CD4-positive, alpha-beta memory T cell (primary cell): ENCODE measurements at regions of chr1 and their contacts with region 1.

Region 1: DNA sequence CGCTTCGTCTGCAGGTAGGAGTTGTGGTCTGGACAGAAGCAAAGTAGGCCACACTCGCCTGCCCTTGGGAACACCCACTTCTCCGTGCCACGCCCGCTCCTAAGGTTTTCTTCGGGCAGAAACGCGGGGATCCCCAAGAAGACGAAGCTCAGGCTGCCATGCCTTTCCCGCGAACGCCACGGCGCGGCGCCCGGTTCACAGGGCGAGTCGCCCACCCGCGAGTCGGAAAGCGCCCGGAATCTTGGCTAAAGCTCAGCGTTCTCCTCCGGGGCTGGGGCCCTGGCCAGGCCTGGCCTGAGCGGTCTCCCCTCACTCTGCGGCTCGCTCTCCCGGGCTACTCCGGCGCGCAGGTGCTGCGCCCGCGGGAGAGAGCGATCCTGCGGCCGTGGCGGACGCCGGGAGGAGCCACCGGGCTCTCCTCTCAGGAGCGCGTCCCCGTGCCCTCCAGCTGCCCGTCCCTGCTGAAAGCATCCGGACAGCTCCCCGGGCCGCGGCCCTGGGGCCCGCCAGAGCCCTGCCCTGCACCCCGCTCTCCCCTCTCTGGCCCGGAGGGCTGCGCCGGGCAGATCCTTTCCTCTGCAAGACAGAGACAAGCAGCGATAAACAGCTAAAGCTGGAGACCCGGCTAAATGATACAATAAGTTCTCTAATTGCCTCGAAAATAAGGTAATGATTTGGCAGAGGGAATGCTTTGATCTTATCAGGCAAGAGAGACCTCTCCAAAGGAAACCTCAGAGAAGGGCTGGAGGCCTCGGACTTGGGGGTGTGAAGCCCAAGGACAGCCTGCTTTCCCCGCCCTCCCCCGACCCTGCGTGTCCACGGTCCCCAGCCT is 6.7 kb upstream of the WNT2B start:
- DNase-seq: peak in 4 of 5 donors; percentile 30 to 51 (median 38)
- H3K4me3 ChIP-seq: peak overlapping the region; percentile 24 to 36
- H3K4me3 Mint-ChIP-seq: peak overlapping the region; percentile 62 to 84 (median 75)
- H3K27ac ChIP-seq: no peak overlapping the region
- H3K27ac Mint-ChIP-seq: no peak overlapping the region
- H3K4me1 ChIP-seq: peaks cover 5% of the 10 kb centered on the region
- H3K4me1 Mint-ChIP-seq: peaks cover 2 to 13% (median 5%) of the 10 kb centered on the region in 4 donors
- H3K27me3 ChIP-seq: peaks cover 39% of the 10 kb centered on the region
- H3K27me3 Mint-ChIP-seq: peaks cover 43 to 51% of the 10 kb centered on the region in 2 donors

Region 2: GRCh38 chr1:112614460-112615065 is 112.5 kb after region 1 on chr1:
- CTCF ChIA-PET with region 1: interaction called, 45 read pairs
- POLR2A ChIA-PET with region 1: interaction called, 4 read pairs
- intact Hi-C with region 1: loop called (anchors 1 kb)
- DNase-seq: peak in 4 of 5 donors; percentile 28 to 48 (median 34)
- H3K4me3 ChIP-seq: no peak overlapping the region
- H3K4me3 Mint-ChIP-seq: peak overlapping the region in 1 of 8 donors; percentile 78
- H3K27ac ChIP-seq: no peak overlapping the region
- H3K27ac Mint-ChIP-seq: peak overlapping the region in 5 of 7 donors; percentile 64 to 89 (median 86)
- H3K4me1 ChIP-seq: peaks cover 13% of the 10 kb centered on the region
- H3K4me1 Mint-ChIP-seq: peaks cover 9 to 32% (median 18%) of the 10 kb centered on the region in 4 donors
- H3K27me3 ChIP-seq: no peaks in the 10 kb centered on the region
- H3K27me3 Mint-ChIP-seq: no peaks in the 10 kb centered on the region

Region 3: DNA sequence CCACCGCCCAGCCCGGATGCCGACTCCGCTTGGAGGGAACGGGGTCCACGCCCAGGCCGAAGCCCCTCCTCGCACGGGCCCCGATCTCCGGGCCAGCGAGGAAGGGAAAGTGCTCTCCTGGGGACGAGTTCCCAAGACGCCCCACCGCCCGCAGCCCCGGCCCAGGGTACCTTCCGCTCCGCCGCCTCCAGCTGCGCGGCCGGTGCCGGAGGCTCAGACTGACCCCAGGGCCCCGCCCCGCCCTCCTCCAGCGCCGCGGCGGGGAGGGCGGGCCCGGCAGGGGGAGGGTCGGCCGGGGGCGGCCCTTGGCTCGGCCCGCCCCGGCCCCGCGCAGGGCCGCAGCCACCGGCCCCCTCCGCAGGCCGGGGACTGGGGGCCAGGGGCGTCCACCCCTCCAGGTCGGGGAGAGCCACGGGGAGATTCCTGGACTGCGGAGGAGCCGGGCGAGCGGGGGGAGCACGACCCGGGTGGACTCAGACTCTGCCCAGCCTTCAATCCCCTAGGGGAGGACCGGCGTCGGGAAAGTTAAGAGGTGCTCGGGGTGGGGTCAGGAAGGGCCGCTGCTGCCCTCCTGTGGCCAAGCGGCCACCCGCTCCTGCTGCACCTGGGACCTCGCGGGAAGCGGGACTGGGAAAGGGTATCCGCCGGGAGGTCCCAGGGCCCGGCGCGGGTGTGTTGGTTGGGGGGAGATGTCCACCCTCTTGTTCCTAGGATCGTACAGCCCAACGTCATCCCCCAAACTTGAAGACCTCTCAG is 205.1 kb after region 1 on chr1 and contains the start of gene RHOC:
- CTCF ChIA-PET with region 1: interaction called, 73 read pairs
- POLR2A ChIA-PET with region 1: interaction called, 6 read pairs
- intact Hi-C with region 1: loop called (anchors 1 kb)
- DNase-seq: peak; percentile 41 to 59 (median 49)
- H3K4me3 ChIP-seq: peak within 1 kb of the TSS in 1 of 2 donors; percentile 45
- H3K4me3 Mint-ChIP-seq: peak within 1 kb of the TSS; percentile 85 to 94 (median 88)
- H3K27ac ChIP-seq: peak within 1 kb of the TSS; percentile 49
- H3K27ac Mint-ChIP-seq: peak within 1 kb of the TSS; percentile 73 to 93 (median 85)
- H3K4me1 ChIP-seq: peaks cover 33% of the 10 kb centered on the region
- H3K4me1 Mint-ChIP-seq: peaks cover 23 to 53% (median 35%) of the 10 kb centered on the region in 4 donors
- H3K27me3 ChIP-seq: no peaks in the 10 kb centered on the region
- H3K27me3 Mint-ChIP-seq: peaks cover 0 to 2% of the 10 kb centered on the region in 2 donors
- total RNA-seq, gene RHOC: 6.1 to 6.7 TPM